ENCODE measurements at regions of chr3 and their contacts with region 1.

Region 1: DNA sequence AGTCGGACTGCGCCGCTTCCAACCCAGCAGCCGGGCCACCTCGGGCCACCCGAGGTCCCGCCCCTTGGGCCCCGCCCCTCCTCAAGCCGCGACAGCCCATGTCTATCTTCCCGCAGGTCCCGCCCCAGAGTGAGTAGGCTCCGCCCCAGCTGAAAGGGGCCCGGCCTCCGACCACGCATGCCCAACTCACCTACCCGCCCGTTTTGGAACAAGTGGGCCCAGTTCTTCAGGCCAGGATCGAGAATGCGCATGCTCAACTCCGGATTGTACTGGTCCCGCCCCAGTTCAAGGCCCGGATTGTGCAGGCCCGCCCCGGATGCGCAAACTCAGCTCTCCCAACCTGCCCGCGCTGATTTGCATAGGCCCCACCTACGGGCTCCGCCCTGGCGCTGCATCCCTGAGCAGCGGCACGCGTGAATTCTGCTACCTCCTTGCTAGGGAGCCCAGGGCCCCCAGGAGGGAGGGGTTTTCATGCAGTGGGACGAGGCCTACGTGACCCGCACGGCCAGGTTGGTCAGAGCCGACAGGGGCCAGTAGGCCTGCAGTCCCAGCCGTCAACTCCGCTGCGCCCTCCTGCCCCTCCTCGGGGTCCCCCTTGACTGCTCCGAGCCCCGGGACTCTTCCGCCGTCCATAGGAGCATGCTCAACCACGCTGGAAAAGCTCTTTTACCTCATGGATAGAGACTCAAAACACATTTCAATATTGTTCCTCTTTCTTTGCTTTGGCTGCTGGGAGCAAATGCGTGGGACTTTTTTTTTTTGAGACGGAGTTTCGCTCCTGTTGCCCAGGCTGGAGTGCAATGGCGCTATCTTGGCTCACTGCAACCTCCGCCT is at the start of gene PFKFB4:
- DNase-seq: peak; percentile 100
- H3K4me3 Mint-ChIP-seq: peak within 1 kb of the TSS; percentile 91
- H3K27ac Mint-ChIP-seq: peak within 1 kb of the TSS; percentile 90
- H3K4me1 Mint-ChIP-seq: peaks cover 52% of the 10 kb centered on the region
- H3K27me3 Mint-ChIP-seq: no peaks in the 10 kb centered on the region
- total RNA-seq, gene PFKFB4: 11.7 and 15.5 TPM in 2 replicates

Region 2: GRCh38 chr3:48268381-48269183 is 288.4 kb before region 1 on chr3:
- intact Hi-C with region 1: loop called (anchors 1 kb)
- DNase-seq: peak; percentile 74
- H3K4me3 Mint-ChIP-seq: peak overlapping the region; percentile 63
- H3K27ac Mint-ChIP-seq: peak overlapping the region; percentile 97
- H3K4me1 Mint-ChIP-seq: peaks cover 51% of the 10 kb centered on the region
- H3K27me3 Mint-ChIP-seq: no peaks in the 10 kb centered on the region

Region 3: DNA sequence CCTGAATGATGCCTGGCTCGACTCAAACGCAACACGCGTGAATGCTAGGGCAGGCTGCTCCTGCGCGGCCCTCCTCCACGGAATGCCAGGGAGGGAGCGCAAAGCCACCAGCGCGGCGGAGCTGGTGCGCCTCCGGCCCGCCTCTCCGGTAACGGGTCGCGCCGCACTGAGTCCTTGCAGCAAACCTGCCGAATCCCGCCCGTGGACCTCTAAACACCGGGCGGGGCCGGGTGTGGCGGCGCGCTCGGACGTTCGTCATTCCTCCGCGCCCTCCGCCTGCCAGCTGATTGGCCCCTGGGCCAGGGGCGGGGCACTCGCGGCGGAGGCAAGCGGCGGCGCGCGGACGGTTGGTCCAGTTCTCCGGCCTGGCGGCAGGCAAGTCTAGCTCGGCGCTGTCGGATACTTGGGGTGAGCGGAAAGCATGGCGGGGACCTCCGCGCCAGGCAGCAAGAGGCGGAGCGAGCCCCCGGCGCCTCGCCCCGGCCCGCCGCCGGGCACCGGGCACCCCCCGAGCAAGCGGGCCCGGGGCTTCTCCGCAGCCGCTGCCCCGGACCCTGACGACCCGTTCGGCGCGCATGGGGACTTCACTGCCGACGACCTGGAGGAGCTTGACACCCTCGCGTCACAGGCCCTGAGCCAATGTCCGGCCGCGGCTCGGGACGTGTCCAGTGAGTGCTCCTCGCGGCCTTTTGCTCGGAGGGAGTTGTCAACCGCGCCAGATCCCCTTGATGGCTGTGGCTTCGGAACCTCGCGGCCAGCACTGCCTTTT is 110.4 kb before region 1 on chr3 and contains the start of gene ATRIP:
- intact Hi-C with region 1: loop called (anchors 1 kb)
- DNase-seq: peak; percentile 88
- H3K4me3 Mint-ChIP-seq: peak within 1 kb of the TSS; percentile 90
- H3K27ac Mint-ChIP-seq: peak within 1 kb of the TSS; percentile 62
- H3K4me1 Mint-ChIP-seq: peaks cover 39% of the 10 kb centered on the region
- H3K27me3 Mint-ChIP-seq: no peaks in the 10 kb centered on the region
- total RNA-seq, gene ATRIP: 16.5 and 20.5 TPM in 2 replicates

Region 4: GRCh38 chr3:48635222-48636021 is 78.4 kb after region 1 on chr3 and contains the start of gene SLC26A6:
- intact Hi-C with region 1: loop called (anchors 1 kb)
- DNase-seq: peak; percentile 96
- H3K4me3 Mint-ChIP-seq: peak within 1 kb of the TSS; percentile 89
- H3K27ac Mint-ChIP-seq: peak within 1 kb of the TSS; percentile 87
- H3K4me1 Mint-ChIP-seq: peaks cover 20% of the 10 kb centered on the region
- H3K27me3 Mint-ChIP-seq: no peaks in the 10 kb centered on the region
- total RNA-seq, gene SLC26A6: 46.3 and 52.8 TPM in 2 replicates

Region 5: GRCh38 chr3:48716982-48717746 is 160.2 kb after region 1 on chr3 and contains the start of gene IP6K2:
- intact Hi-C with region 1: loop called (anchors 5 kb)
- DNase-seq: peak; percentile 98
- H3K4me3 Mint-ChIP-seq: peak within 1 kb of the TSS; percentile 98
- H3K27ac Mint-ChIP-seq: peak within 1 kb of the TSS; percentile 94
- H3K4me1 Mint-ChIP-seq: peaks cover 29% of the 10 kb centered on the region
- H3K27me3 Mint-ChIP-seq: peaks cover 17% of the 10 kb centered on the region
- total RNA-seq, gene IP6K2: 59.9 and 61.0 TPM in 2 replicates

Region 6: GRCh38 chr3:49104483-49105291 is 547.7 kb after region 1 on chr3 and contains the start of gene QARS1:
- intact Hi-C with region 1: no loop called
- DNase-seq: peak; percentile 87
- H3K4me3 Mint-ChIP-seq: peak within 1 kb of the TSS; percentile 98
- H3K27ac Mint-ChIP-seq: peak within 1 kb of the TSS; percentile 94
- H3K4me1 Mint-ChIP-seq: peaks cover 27% of the 10 kb centered on the region
- H3K27me3 Mint-ChIP-seq: no peaks in the 10 kb centered on the region
- total RNA-seq, gene QARS1: 185 and 200 TPM in 2 replicates

Region 7: DNA sequence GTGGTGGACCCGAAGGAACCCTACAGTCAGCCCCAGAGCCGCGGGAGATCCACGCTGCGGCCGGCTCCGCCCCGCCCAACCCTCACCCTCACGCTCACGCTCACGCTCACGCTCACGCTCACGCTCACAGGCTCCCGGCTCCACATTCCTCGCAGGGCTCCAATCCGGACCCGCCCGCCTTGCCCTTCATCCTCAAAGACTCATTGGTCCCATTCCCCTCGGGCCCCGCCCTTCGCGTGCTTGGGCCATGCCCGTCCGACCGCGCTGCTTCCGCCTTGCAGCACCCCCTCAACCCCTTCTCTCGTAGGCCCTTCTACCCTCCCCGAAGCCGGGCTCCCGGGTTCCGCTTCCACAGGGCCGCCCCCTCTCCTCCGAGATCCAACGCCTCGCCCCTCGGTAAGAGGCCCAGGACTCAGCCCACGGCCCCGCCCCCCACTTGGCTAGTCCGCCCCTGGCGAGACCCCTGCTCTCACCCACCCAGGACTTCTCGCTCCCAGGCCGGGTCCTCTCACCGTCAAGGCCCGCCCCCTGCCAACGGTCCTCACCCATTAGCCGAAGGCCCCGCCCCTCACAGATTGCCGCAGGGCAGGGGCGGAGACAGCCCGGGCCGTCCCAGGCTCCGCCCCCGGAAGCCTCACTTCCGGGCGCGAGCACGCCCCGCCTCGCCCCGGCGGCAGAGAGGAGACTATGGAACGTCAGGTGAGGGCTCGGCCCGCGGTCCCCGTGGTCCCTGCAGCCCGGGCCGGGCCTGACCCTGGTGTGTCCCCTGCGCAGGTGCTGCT is 1116.9 kb after region 1 on chr3 and contains the start of gene APEH:
- intact Hi-C with region 1: loop called (anchors 2 kb)
- DNase-seq: peak; percentile 96
- H3K4me3 Mint-ChIP-seq: peak within 1 kb of the TSS; percentile 87
- H3K27ac Mint-ChIP-seq: peak within 1 kb of the TSS; percentile 96
- H3K4me1 Mint-ChIP-seq: peaks cover 19% of the 10 kb centered on the region
- H3K27me3 Mint-ChIP-seq: no peaks in the 10 kb centered on the region
- total RNA-seq, gene APEH: 113 and 115 TPM in 2 replicates

Measured in activated T-helper 1 cell treated with anti-CD3 and anti-CD28 coated beads, Interleukin-12 subunit alpha, Interleukin-12 subunit beta, Interleukin-2, Interleukin-4 antibody, amounts not matched to agents 30 ng/mL and 10 ng/mL and 1 ng/mL, durations not matched to agents 14 hours and 24 hours and 36 hours (primary cell).